GM12878 (cell line): ENCODE measurements at regions of chr12 and their contacts with region 1.

Region 1: DNA sequence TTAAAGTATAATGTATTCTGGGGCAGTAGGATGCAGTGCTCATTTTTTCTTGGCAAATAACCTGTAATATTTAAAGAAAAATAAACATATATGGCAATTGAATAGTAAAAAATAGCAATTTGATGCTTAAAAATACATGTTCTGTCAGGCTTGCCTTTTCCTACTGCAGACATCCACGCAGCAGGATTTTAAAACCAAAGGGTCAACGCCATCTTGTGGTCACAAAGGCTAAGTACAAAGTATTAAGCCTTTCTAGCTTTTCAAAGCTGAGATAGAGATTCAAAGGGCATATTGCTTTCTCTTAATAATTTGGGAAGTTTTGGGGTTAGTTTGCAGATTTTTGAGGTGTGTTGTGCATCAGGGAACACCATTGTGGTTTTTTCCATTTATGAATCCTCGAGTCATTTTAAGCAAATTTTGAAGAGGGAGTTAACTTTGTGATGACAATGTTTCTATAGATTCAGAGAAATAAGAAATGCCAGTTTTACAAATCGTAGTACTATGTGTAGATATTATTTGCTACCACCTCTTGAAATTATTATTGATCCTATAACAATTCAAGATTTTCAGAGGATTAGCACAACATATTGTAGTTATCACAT is 4.7 kb upstream of the CCER1 start:
- DNase-seq: no peak
- ATAC-seq: peak; percentile 84
- H3K4me3 ChIP-seq: no peak overlapping the region
- H3K27ac ChIP-seq: no peak overlapping the region
- H3K4me1 ChIP-seq: no peaks in the 10 kb centered on the region
- H3K27me3 ChIP-seq: no peaks in the 10 kb centered on the region
- CTCF ChIP-seq: peak; percentile 66 to 71 (median 69)
- EP300 ChIP-seq: no peak
- POLR2A ChIP-seq: no peak
- RAD21 ChIP-seq: peak; percentile 60

Region 2: DNA sequence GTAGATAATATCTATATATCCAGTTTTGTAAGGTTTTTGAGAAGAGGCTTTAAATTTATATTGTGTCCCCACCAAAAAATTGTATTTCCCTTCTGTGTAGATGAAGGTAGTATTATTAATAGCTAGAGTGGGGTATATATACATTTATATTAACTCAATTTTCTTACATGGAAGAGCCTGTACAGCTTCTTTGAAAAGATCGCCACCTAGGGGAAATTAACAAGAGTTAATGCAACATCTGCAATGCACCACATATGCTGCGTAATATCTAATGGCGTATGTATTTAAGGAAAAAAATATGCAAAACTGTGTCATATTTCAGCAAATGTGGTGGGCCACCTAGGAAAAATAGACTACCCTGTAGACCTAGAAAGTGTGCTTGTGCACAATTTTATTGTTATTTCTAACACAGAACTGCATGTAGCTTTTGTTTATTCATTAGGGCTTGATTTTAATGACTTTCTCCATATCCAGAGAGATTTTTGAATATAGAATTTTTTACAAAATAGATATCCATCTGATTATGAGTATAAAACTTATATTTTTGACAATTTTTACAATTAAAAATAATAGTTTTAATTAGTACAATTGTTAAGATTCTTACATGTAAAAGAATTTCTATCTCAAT is 18.7 kb before region 1 on chr12:
- CTCF ChIA-PET with region 1: interaction called, 41 read pairs
- POLR2A ChIA-PET with region 1: no interaction called
- RAD21 ChIA-PET with region 1: interaction called, 8 read pairs
- SMC1A ChIA-PET with region 1: interaction called, 6 read pairs
- in situ Hi-C with region 1: no loop called
- intact Hi-C with region 1: no loop called
- DNase-seq: no peak
- ATAC-seq: peak; percentile 88
- H3K4me3 ChIP-seq: no peak overlapping the region
- H3K27ac ChIP-seq: no peak overlapping the region
- H3K4me1 ChIP-seq: no peaks in the 10 kb centered on the region
- H3K27me3 ChIP-seq: no peaks in the 10 kb centered on the region
- CTCF ChIP-seq: peak; percentile 41 to 56 (median 55); a peak in 5 of 6 replicates
- EP300 ChIP-seq: no peak
- POLR2A ChIP-seq: no peak
- RAD21 ChIP-seq: peak; percentile 72

Region 3: GRCh38 chr12:90984114-90984513 is 24.5 kb after region 1 on chr12:
- CTCF ChIA-PET with region 1: no interaction called
- POLR2A ChIA-PET with region 1: no interaction called
- RAD21 ChIA-PET with region 1: no interaction called
- SMC1A ChIA-PET with region 1: no interaction called
- in situ Hi-C with region 1: no loop called
- intact Hi-C with region 1: no loop called
- DNase-seq: no peak
- ATAC-seq: no peak
- H3K4me3 ChIP-seq: no peak overlapping the region
- H3K27ac ChIP-seq: no peak overlapping the region
- H3K4me1 ChIP-seq: no peaks in the 10 kb centered on the region
- H3K27me3 ChIP-seq: no peaks in the 10 kb centered on the region; a peak in 1 of 4 replicates
- CTCF ChIP-seq: no peak
- EP300 ChIP-seq: no peak
- POLR2A ChIP-seq: no peak
- RAD21 ChIP-seq: no peak